MCF 10A (cell line): ENCODE measurements at regions of chr9 and their contacts with region 1.

Region 1: DNA sequence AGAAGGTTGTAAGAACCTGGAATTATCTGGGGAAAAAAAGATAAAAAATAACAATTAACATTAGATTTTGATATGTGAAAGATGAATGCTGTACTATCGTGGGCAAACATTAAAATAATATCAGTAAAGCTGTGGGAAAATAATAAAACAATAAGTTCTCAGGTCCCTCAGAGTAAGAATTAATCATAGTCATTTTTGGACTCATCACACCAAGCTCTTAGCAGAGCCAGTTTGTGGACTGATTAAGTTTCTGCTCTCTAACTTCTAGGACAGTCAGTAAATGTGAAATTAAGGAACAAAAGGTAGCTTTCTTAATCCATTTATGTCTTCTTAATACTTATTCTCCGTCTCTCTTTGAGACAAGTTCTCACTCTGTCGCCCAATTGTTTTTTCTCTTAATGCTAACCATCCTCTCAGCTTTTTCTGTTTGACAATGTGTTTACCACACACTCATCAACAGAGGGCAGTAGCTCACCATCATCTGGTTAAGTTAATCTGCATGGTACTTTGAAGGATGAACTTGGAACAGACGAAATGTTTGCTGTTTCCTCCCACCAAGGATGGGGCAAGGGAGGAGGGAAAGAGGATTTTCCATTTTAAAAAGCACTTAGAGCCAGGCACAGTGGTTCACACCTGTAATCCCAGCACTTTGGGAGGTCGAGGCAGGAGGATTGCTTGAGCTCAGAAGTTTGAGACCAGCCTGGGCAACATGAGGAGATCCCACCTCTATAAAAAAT is 5.3 kb upstream of the ACO1 start:
- DNase-seq: peak; percentile 90
- H3K4me3 Mint-ChIP-seq: no peak overlapping the region
- H3K27ac Mint-ChIP-seq: no peak overlapping the region
- H3K4me1 Mint-ChIP-seq: peaks cover 18% of the 10 kb centered on the region
- H3K27me3 Mint-ChIP-seq: peaks cover 14% of the 10 kb centered on the region
- CTCF ChIP-seq: peak; percentile 59

Region 2: DNA sequence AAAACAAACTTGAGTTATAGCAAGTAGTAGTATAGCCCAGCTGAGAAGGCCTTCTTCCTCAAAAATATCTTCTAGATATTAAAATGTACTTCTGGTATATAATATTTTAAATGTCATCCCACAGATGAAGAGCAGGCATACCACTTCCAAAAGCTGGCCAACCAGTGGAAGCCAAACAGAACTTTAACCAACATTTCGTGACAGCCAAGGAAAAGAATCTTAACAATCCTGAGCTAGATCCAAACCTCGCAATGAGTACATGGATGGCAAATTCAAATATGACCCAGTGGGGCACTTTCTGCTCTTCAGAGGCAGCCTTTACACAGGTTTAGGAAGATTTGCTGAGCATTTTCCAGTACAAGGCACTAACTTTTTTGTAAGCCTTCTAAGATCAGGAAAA is 86.5 kb before region 1 on chr9:
- CTCF ChIA-PET with region 1: no interaction called
- POLR2A ChIA-PET with region 1: no interaction called
- intact Hi-C with region 1: no loop called
- DNase-seq: no peak
- H3K4me3 Mint-ChIP-seq: no peak overlapping the region
- H3K27ac Mint-ChIP-seq: no peak overlapping the region
- H3K4me1 Mint-ChIP-seq: no peaks in the 10 kb centered on the region
- H3K27me3 Mint-ChIP-seq: peaks cover 76% of the 10 kb centered on the region
- CTCF ChIP-seq: no peak

Region 3: GRCh38 chr9:32395490-32396216 is 16.5 kb after region 1 on chr9:
- CTCF ChIA-PET with region 1: interaction called, 29 read pairs
- POLR2A ChIA-PET with region 1: interaction called, 21 read pairs
- intact Hi-C with region 1: no loop called
- DNase-seq: peak; percentile 92
- H3K4me3 Mint-ChIP-seq: peak overlapping the region; percentile 31
- H3K27ac Mint-ChIP-seq: peak overlapping the region; percentile 94
- H3K4me1 Mint-ChIP-seq: peaks cover 21% of the 10 kb centered on the region
- H3K27me3 Mint-ChIP-seq: no peaks in the 10 kb centered on the region
- CTCF ChIP-seq: no peak

Region 4: GRCh38 chr9:32431940-32432555 is 52.9 kb after region 1 on chr9:
- CTCF ChIA-PET with region 1: interaction called, 45 read pairs
- POLR2A ChIA-PET with region 1: interaction called, 6 read pairs
- intact Hi-C with region 1: loop called (anchors 1 kb)
- DNase-seq: peak; percentile 51
- H3K4me3 Mint-ChIP-seq: no peak overlapping the region
- H3K27ac Mint-ChIP-seq: peak overlapping the region; percentile 46
- H3K4me1 Mint-ChIP-seq: no peaks in the 10 kb centered on the region
- H3K27me3 Mint-ChIP-seq: no peaks in the 10 kb centered on the region
- CTCF ChIP-seq: peak; percentile 47

Region 5: GRCh38 chr9:32543047-32543446 is 163.9 kb after region 1 on chr9:
- CTCF ChIA-PET with region 1: interaction called, 18 read pairs
- POLR2A ChIA-PET with region 1: no interaction called
- intact Hi-C with region 1: no loop called
- DNase-seq: no peak
- H3K4me3 Mint-ChIP-seq: no peak overlapping the region
- H3K27ac Mint-ChIP-seq: no peak overlapping the region
- H3K4me1 Mint-ChIP-seq: no peaks in the 10 kb centered on the region
- H3K27me3 Mint-ChIP-seq: no peaks in the 10 kb centered on the region
- CTCF ChIP-seq: no peak

Region 6: DNA sequence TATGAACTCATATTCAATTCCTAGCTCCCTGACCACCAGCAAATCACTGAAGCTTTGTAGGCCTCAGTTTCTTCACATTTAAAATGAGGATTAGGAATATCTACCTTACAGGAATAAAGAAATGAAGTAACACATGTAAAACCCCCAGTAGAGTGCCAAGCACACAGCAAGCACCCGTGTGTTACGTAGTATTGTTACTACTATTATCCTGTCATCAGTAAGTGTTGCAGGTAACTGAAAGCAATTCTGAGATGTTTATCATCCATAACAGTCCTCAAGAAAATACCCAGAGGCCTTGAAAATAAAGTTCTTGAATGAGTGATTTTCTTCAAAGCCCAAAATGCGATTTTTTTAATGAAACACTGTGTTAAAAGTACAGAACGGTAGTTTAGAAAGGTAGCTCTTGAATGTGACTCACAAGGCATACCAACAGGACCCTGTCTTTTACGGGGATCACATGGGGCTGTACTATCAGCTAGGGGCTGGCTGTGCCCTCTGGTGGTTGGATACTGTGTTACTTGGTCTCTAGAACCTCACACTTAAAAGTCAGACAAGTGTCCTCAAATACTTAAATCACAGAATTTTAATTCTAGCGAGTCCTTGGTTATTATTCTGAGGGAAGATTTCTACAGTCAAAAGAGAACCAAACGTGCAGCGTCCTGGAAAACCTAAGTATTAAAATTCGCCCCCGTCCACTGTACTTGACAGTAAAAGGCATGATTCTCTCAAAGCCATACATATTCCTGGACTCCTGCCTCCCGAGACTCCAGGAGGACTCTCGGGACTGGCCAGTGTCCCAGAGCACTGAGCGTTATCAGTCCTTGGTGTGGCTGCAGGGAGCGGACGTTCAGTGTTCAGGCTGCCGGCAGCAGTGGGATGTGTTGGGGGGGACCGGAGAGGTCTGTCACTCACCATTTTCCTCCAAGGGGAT is 193.1 kb after region 1 on chr9:
- CTCF ChIA-PET with region 1: interaction called, 601 read pairs
- POLR2A ChIA-PET with region 1: interaction called, 49 read pairs
- intact Hi-C with region 1: loop called (anchors 1 kb)
- DNase-seq: peak; percentile 84
- H3K4me3 Mint-ChIP-seq: peak overlapping the region; percentile 93
- H3K27ac Mint-ChIP-seq: peak overlapping the region; percentile 90
- H3K4me1 Mint-ChIP-seq: peaks cover 13% of the 10 kb centered on the region
- H3K27me3 Mint-ChIP-seq: no peaks in the 10 kb centered on the region
- CTCF ChIP-seq: peak; percentile 64

Region 7: GRCh38 chr9:32968101-32969011 is 589.2 kb after region 1 on chr9:
- CTCF ChIA-PET with region 1: interaction called, 70 read pairs
- POLR2A ChIA-PET with region 1: no interaction called
- intact Hi-C with region 1: loop called (anchors 1 kb)
- DNase-seq: peak; percentile 59
- H3K4me3 Mint-ChIP-seq: no peak overlapping the region
- H3K27ac Mint-ChIP-seq: no peak overlapping the region
- H3K4me1 Mint-ChIP-seq: no peaks in the 10 kb centered on the region
- H3K27me3 Mint-ChIP-seq: no peaks in the 10 kb centered on the region
- CTCF ChIP-seq: peak; percentile 54